Panc1 (cell line): ENCODE measurements at regions of chr19 and their contacts with region 1.

Region 1: DNA sequence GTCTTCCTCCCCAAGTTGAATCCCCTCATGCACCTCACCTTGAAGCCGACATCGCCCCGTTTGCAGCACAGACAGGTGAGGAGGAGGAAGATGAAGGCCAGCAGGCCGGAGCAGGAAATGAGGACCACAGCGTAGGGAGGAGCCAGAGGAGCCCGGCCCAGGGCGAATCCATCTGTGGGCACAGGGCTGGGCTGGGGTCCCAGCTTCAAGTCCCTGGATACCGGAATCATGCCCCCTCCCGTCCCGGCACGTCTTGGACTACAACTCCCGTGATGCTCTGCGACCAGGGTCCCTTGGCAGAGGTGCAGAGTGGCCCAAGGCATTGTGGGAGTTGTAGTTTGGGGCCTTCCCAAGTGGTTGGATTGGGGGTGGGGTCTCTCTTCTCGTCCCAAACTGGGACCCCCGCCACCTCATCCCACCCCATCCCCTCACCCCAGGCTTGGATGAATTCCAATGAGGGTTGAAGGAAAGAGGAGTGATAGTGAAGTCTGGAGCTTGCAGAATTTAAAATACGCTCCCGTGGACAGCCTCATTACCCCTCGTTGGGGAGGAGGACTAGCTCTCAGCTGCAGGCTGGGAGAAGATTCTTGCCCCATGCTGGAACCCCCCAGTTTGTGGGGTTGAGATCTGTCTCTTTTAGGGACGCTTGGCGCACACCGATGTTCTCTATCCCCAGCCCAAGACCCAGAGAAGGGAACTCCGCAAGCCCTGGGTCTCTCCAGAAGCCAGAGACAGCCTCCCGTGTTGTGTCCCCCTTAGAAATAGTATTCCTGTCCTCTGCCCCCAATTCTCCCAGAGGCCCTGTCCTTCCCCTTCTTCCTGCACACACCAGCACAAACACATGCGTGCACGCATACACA is 984 bp downstream of the LMTK3 start:
- DNase-seq: no peak
- ATAC-seq: peak; percentile 74
- H3K4me3 ChIP-seq: peak overlapping the region; percentile 33 to 39
- H3K27ac ChIP-seq: 0 out of 2 replicates have a peak overlapping the region, but pooled peaks have one; percentile 29
- H3K4me1 ChIP-seq: no peaks in the 10 kb centered on the region
- H3K27me3 ChIP-seq: no peaks in the 10 kb centered on the region
- CTCF ChIP-seq: no peak

Region 2: DNA sequence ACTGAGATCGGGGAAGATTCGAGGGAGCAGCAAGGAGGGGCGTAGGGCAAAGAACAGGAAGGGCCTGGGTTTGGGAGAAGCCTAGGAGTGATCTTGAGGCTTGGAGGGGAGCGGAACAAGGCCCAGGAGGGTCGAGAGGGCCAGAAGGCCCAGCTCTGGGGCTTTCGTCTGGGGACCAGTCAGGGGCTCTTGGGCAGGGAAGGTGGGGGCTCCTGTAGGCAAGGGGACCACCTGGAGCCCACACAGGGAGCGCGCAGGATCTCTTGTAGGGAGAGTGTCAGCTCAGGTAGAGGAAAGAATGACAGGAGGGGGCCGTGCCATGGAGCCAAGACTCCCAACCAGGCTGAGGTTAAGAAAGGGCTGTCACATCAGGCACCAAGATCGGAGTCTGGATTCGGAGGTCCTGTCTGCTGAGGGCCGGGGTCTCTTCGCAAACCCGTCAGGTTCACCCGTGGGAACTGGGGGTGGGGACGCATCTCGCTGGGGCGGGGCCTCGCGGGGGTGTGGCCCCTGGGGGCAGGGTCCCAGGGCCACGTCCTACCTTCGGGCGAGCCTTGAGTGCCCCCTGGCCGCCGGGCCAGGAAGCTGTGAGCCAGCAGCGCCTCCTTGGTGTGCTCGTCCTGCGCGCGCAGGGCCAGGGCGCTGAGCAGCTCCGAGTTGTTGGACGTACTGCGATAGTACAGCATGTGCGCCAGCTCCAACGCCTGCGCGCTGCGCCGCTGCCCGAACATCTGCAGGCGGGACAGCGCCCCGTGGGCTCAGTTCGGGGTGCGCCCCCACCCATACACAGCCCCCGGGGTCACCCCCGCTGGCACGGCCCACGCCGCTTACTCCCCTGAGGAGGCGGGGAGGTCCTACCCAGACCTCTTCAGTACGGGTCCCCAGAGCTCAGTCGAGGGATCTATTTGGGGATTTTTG is 176.9 kb before region 1 on chr19:
- CTCF ChIA-PET with region 1: no interaction called
- POLR2A ChIA-PET with region 1: no interaction called
- in situ Hi-C with region 1: no loop called
- intact Hi-C with region 1: no loop called
- DNase-seq: no peak
- ATAC-seq: peak; percentile 90
- H3K4me3 ChIP-seq: peak overlapping the region; percentile 42 to 66
- H3K27ac ChIP-seq: peak overlapping the region; percentile 71
- H3K4me1 ChIP-seq: peaks cover 7% of the 10 kb centered on the region
- H3K27me3 ChIP-seq: no peaks in the 10 kb centered on the region
- CTCF ChIP-seq: peak; percentile 88

Region 3: GRCh38 chr19:48475369-48476068 is 35.1 kb before region 1 on chr19:
- CTCF ChIA-PET with region 1: interaction called, 10 read pairs
- POLR2A ChIA-PET with region 1: no interaction called
- in situ Hi-C with region 1: no loop called
- intact Hi-C with region 1: no loop called
- DNase-seq: no peak
- ATAC-seq: no peak
- H3K4me3 ChIP-seq: no peak overlapping the region
- H3K27ac ChIP-seq: no peak overlapping the region
- H3K4me1 ChIP-seq: no peaks in the 10 kb centered on the region
- H3K27me3 ChIP-seq: no peaks in the 10 kb centered on the region
- CTCF ChIP-seq: no peak

Region 4: DNA sequence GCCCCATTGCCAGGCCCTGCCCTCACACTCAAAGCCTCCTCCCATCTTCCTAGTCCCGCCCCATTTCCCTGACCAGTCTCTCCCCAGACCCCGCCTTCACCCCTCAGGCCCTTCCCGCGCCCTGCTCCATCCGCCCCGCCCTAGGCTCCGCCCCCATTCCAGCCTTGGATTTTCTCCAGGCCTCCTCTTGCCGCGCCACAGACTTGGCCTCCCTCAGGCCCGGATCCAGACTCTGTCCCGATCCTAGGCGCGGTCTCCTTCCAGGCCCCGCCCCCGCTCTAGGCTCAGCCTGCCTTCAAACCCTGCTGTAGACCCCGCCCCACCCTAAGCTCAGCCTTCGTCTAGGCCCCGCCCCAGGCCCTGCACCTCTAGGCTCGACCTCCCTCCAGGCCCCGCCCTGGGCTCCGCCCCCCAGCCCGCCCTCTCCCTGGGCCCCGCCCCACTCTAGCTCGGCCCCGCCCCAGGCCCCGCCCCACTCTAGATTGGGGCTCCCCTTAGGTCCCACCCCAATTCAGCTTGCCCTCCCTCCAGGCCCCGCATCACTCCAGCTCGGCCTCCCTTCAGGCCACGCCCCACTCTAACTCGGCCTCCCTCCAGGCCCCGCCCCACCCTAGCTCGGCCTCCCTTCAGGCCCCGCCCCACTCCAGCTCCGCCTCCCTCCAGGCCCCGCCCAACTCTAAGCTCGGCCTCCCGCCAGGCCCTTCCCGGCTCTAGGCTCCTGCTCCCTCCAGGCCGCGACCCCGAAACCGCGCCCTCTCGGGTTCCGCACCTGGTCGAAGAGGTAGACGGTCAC is 17.5 kb before region 1 on chr19:
- CTCF ChIA-PET with region 1: interaction called, 11 read pairs
- POLR2A ChIA-PET with region 1: interaction called, 3 read pairs
- in situ Hi-C with region 1: no loop called
- intact Hi-C with region 1: no loop called
- DNase-seq: peak; percentile 75
- ATAC-seq: peak; percentile 78
- H3K4me3 ChIP-seq: peak overlapping the region; percentile 41 to 49
- H3K27ac ChIP-seq: no peak overlapping the region; the same call in 1 of the 2 replicates
- H3K4me1 ChIP-seq: peaks cover 18% of the 10 kb centered on the region
- H3K27me3 ChIP-seq: no peaks in the 10 kb centered on the region
- CTCF ChIP-seq: no peak

Region 5: GRCh38 chr19:48524728-48525127 is 14.1 kb after region 1 on chr19:
- CTCF ChIA-PET with region 1: no interaction called
- POLR2A ChIA-PET with region 1: no interaction called
- in situ Hi-C with region 1: no loop called
- intact Hi-C with region 1: no loop called
- DNase-seq: no peak
- ATAC-seq: no peak
- H3K4me3 ChIP-seq: no peak overlapping the region
- H3K27ac ChIP-seq: no peak overlapping the region
- H3K4me1 ChIP-seq: no peaks in the 10 kb centered on the region
- H3K27me3 ChIP-seq: no peaks in the 10 kb centered on the region
- CTCF ChIP-seq: no peak

Region 6: DNA sequence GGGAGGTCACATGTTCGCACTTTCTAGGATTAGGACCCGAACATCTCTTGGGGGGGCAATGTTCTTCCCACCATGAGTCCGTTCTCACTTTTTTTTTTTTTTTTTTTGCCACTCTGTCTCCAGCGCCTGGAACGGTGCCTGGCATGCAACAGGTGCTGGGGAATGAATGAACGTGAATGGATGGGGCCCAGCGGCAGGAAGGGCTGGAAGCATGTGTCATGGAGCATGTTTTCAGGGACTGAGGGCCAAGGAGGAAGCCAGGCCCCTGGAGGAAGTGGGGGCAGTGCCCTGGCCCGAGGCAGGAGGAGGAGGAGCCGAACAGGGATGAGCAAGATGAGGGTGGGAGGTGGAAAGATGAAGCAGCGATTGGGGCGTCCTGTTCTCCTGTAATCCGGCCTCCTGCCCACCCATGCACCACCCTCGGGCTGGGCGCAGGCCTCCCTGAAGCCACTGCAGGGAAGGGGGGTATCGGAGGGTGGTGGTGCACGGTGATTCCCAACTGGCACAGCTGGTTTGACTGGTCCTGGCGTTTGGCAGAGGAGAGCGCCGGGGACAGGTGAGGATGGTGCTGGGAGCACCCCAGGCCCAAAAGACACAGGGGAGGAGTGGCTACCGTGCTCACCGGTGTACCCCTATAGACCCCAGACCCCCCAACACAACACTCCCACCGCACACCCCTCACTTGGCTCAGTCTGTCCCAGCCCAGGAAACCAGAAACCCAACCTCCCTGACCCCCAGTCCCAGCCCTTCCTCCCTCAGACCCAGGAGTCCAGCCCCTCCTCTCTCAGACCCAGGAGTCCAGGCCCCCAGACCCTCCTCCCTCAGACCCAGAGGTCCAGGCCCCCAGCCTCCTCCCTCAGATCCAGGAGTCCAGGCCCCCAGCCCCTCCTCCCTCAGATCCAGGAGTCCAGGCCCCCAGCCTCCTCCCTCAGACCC is 32.7 kb after region 1 on chr19:
- CTCF ChIA-PET with region 1: interaction called, 19 read pairs
- POLR2A ChIA-PET with region 1: no interaction called
- in situ Hi-C with region 1: no loop called
- intact Hi-C with region 1: no loop called
- DNase-seq: no peak
- ATAC-seq: peak; percentile 81
- H3K4me3 ChIP-seq: no peak overlapping the region
- H3K27ac ChIP-seq: no peak overlapping the region
- H3K4me1 ChIP-seq: peaks cover 3% of the 10 kb centered on the region
- H3K27me3 ChIP-seq: no peaks in the 10 kb centered on the region
- CTCF ChIP-seq: no peak

Region 7: GRCh38 chr19:48553676-48554386 is 43.2 kb after region 1 on chr19:
- CTCF ChIA-PET with region 1: interaction called, 13 read pairs
- POLR2A ChIA-PET with region 1: interaction called, 9 read pairs
- in situ Hi-C with region 1: no loop called
- intact Hi-C with region 1: no loop called
- DNase-seq: no peak
- ATAC-seq: peak; percentile 80
- H3K4me3 ChIP-seq: no peak overlapping the region
- H3K27ac ChIP-seq: peak overlapping the region; percentile 75
- H3K4me1 ChIP-seq: peaks cover 27% of the 10 kb centered on the region
- H3K27me3 ChIP-seq: no peaks in the 10 kb centered on the region
- CTCF ChIP-seq: no peak

Region 8: DNA sequence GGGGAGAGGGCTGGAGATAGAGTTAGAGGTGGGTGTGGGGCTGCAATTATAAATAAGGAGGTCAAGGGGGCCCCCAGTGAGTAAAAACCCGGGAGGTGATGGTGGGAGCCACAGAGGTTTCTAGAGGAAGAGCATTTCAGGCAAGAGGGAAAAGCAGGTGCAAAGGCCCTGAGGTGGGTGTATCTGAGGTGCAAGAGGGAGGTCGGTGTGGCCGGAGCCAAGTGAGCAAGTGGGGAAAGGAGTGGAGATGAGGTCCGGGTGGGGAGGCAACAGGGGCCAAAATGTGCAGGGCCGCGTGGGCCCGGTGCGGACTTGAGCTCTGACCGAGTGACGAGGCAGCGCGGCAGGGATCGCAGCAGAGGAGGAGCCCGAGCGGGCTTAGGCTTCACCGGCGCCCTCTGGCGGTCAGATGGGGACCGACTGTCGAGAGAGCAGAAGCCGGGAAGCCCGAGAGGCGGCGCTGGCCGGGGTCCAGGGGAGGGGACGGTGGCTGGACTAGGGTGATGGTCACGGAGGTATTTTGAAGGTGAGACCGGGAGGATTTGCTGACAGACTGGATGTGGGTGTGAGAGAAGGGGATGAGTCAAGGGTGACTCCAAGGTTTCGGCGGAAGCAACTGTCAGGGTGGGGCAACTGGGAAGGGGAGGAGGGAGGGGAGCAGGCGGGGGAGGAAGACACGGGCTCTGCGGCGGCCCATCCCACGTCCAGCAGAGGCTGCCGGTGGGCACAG is 78.2 kb after region 1 on chr19:
- CTCF ChIA-PET with region 1: interaction called, 44 read pairs
- POLR2A ChIA-PET with region 1: no interaction called
- in situ Hi-C with region 1: no loop called
- intact Hi-C with region 1: loop called (anchors 2 kb)
- DNase-seq: peak; percentile 47
- ATAC-seq: peak; percentile 93
- H3K4me3 ChIP-seq: peak overlapping the region; percentile 39 to 60
- H3K27ac ChIP-seq: no peak overlapping the region
- H3K4me1 ChIP-seq: 0 out of 2 replicates have a peak, but pooled peaks cover 4% of the 10 kb centered on the region
- H3K27me3 ChIP-seq: no peaks in the 10 kb centered on the region
- CTCF ChIP-seq: peak; percentile 94